ENCODE measurements at regions of chr21 and their contacts with region 1.

Region 1: GRCh38 chr21:45130324-45130774 is 56.0 kb downstream of the ADARB1 start:
- H3K4me3 ChIP-seq: peak overlapping the region; percentile 8
- H3K27ac ChIP-seq: 0 out of 2 replicates have a peak overlapping the region, but pooled peaks have one; percentile 14
- H3K4me1 ChIP-seq: peaks cover 11% of the 10 kb centered on the region
- CTCF ChIP-seq: no peak

Region 2: GRCh38 chr21:44949779-44950198 is 180.6 kb before region 1 on chr21:
- CTCF ChIA-PET with region 1: interaction called, 333 read pairs
- POLR2A ChIA-PET with region 1: no interaction called
- H3K4me3 ChIP-seq: no peak overlapping the region
- H3K27ac ChIP-seq: no peak overlapping the region
- H3K4me1 ChIP-seq: no peaks in the 10 kb centered on the region
- CTCF ChIP-seq: peak; percentile 94

Region 3: GRCh38 chr21:45074048-45074817 is 56.1 kb before region 1 on chr21 and contains the start of gene ADARB1:
- CTCF ChIA-PET with region 1: interaction called, 19 read pairs
- POLR2A ChIA-PET with region 1: interaction called, 5 read pairs
- H3K4me3 ChIP-seq: peak within 1 kb of the TSS; percentile 71
- H3K27ac ChIP-seq: peak within 1 kb of the TSS; percentile 87
- H3K4me1 ChIP-seq: peaks cover 3% of the 10 kb centered on the region; the same call in 1 of the 2 replicates
- CTCF ChIP-seq: no peak

Region 4: GRCh38 chr21:45098867-45099266 is 31.5 kb before region 1 on chr21:
- CTCF ChIA-PET with region 1: interaction called, 40 read pairs
- POLR2A ChIA-PET with region 1: no interaction called
- H3K4me3 ChIP-seq: no peak overlapping the region
- H3K27ac ChIP-seq: no peak overlapping the region
- H3K4me1 ChIP-seq: 0 out of 2 replicates have a peak, but pooled peaks cover under 1% of the 10 kb centered on the region
- CTCF ChIP-seq: peak; percentile 49; the same call in 1 of the 2 replicates

Region 5: DNA sequence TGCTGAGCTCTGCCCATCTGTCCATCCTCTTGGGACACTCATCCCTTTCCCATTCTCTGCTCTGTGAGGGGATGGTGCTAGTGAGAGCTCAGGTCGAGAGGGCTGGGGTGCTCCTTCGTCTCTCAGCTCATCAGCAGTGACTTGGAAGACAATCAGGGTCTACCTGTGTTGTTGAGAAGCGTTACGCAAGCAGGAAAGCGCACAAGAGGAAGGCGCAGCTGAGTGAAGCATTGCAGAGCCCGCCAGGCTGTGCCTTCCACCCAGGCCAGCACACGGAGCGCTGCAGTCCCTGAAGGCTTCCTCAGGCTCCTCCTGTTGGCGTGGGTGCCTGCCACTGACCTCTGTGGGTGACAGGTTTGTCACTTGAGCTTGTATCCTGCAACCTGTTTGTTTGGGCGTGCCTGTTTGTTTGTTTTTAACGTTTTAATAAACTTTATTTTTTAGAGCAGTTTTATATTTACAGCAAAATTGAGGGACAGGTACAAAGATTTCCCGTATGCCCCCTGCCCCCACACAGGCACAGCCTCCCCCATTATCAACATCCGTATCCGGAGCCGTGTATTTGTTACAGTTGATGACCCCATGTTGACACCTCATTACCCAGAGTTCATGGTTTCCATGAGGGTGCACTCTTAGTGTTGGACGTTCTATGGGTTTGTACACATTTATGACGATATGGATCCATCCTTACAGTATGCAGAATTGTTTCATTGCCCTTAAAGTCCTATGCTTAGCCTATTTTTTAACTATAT is 19.3 kb before region 1 on chr21:
- CTCF ChIA-PET with region 1: interaction called, 37 read pairs
- POLR2A ChIA-PET with region 1: no interaction called
- H3K4me3 ChIP-seq: no peak overlapping the region
- H3K27ac ChIP-seq: no peak overlapping the region
- H3K4me1 ChIP-seq: peaks cover 10% of the 10 kb centered on the region; the same call in 1 of the 2 replicates
- CTCF ChIP-seq: no peak

Region 6: DNA sequence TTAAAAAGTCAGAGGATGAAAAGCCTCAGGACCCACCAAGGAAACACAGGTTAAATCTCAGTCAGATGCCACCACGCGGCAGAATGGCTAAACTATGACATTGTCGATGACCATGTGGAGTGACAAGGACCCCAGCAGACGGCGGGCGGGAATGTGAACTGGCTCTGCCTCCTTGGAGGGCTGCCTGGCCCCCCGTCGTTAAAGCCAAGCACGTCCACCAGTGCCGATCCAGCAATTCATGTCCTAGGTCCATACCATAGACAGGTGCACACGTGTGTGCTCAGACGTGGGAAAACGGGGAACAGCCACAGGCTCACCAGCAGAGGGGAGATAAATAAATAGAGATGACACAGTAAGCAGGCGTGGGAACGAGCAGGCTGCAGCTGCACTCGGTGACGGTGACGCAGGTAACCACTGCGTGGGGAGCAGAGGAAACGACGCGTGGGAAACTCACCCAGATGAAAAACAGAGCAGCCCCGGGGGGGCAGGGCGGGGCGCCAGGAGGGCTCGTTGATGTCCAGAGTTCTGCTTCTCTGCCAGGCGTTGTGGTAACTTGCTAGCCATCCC is 484.9 kb after region 1 on chr21:
- CTCF ChIA-PET with region 1: no interaction called
- POLR2A ChIA-PET with region 1: no interaction called
- H3K4me3 ChIP-seq: no peak overlapping the region
- H3K27ac ChIP-seq: no peak overlapping the region
- H3K4me1 ChIP-seq: peaks cover 15% of the 10 kb centered on the region; the same call in 1 of the 2 replicates
- CTCF ChIP-seq: no peak

Measured in HEK293 (cell line).